ENCODE measurements at regions of chr18 and their contacts with region 1.

Region 1: DNA sequence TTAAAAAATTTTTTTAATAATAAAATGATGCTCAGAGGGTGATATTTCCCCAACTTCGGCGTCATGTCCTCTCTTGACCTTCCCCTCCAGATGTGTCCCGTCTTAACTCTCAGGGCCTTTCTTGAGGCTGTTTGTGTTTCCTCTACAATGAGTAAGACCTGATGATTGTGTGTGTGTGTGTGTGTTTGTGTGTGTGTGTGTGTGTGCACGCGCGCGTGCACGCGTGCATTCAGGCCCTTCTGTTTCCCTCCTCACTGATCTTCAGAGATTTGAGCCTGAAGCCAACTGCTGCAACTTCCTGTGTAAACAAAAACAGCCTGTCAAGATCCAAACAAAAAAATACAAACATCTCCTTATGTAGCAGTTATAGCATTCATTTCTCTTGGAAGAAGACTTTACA is 24.1 kb upstream of the CETN1 start:
- H3K4me3 Mint-ChIP-seq: no peak overlapping the region
- H3K27ac Mint-ChIP-seq: no peak overlapping the region
- H3K4me1 Mint-ChIP-seq: peaks cover 10% of the 10 kb centered on the region
- H3K27me3 Mint-ChIP-seq: peaks cover 4% of the 10 kb centered on the region

Region 2: DNA sequence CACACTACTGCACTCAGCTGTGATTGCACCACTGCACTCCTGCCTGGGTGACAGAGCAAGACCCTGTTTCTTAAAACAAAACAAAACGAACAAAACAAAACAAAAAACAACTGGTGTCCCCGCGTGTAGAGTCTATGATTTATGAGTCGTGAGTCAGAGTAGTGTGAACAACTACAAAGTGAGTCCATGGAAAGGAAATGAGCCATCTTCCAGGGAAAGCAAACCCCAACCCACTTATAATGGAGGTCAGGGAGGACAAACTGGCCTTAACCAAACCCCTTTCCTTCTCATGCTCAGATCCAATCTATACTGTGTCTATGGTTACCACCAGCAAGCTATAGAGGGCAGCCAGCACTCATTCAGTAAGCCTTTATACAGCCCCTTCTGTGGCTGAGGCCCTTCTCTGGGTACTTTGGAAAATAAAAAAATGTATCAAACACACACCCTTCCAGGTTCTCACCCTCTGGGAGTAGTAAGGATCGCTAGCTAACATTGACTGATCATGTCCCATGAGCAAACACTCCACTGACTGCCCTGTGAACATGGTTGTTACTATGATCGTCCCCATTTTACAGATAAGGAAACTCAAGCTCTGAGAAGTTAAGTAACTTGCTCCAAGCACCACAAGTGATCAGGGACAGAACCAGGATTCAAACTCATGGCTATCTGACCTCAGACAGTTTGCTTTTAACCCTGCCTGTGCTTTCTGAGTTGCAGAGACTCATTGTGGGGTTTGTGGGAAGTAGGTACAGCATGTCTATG is 30.8 kb before region 1 on chr18:
- intact Hi-C with region 1: loop called (anchors 2 kb)
- H3K4me3 Mint-ChIP-seq: no peak overlapping the region
- H3K27ac Mint-ChIP-seq: no peak overlapping the region
- H3K4me1 Mint-ChIP-seq: peaks cover 11% of the 10 kb centered on the region
- H3K27me3 Mint-ChIP-seq: peaks cover 6% of the 10 kb centered on the region

Measured in dendritic cell treated with granulocyte-macrophage colony-stimulating factor and Interleukin-4, amounts not matched to agents 40 ng/mL and 50 ng/mL, for 4 days (primary cell).